SK-N-SH (cell line): ENCODE measurements at regions of chr17 and their contacts with region 1.

Region 1: GRCh38 chr17:74647871-74648672 is 24.5 kb upstream of the CD300E start:
- DNase-seq: peak; percentile 67
- H3K4me3 ChIP-seq: no peak overlapping the region
- H3K27ac ChIP-seq: peak overlapping the region in 1 of 2 experiments; percentile 17; a peak in 1 of 4 replicates
- H3K4me1 ChIP-seq: peaks cover 0 to 26% of the 10 kb centered on the region in 2 experiments; a peak in 1 of 4 replicates
- H3K27me3 ChIP-seq: no peaks in the 10 kb centered on the region
- CTCF ChIP-seq: no peak
- EP300 ChIP-seq: peak in 1 of 2 experiments; percentile 60; a peak in 1 of 4 replicates
- RAD21 ChIP-seq: no peak

Region 2: DNA sequence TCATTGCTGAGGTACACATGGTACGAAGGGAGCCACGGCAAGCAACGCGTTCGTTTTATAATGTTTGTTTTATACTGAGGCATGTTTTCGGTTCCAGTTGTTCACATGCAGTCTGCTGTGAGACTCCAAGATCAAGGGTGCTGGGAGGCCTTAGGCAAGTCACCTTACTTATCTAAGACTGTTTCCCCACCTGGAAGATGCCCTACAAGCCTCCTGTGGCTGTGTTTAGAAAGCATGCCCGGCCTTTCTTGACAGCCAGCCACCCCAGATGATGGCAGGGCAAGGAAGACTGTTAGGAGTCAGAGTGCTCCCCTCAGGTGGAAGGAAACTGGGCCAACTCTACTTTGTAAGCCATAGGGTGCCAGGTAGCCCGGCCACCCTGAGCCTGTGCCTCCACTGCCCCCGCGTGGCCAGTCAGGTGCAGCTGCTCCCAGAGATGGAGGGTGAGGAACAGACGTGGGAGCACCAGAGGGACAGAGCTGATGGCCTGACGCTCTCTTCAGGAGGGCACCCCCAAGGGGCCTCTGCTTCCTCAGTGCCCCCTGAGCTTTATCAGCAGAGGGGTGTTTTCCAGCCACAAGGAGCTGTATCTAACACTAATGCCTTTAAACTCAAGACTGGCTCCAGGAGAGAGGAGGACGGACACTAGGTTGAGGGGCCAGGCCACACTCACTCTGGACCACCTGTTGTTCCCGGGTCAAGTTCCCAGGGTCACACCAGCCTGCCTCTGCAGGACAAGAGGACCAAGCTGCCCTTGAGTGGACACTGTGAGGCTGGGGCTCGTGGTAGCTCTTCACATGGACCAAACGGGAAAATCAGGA is 122.6 kb after region 1 on chr17:
- CTCF ChIA-PET with region 1: interaction called, 17 read pairs
- POLR2A ChIA-PET with region 1: no interaction called
- DNase-seq: peak; percentile 91
- H3K4me3 ChIP-seq: no peak overlapping the region
- H3K27ac ChIP-seq: no peak overlapping the region
- H3K4me1 ChIP-seq: peaks cover 23 to 29% of the 10 kb centered on the region in 2 experiments; a peak in 3 of 4 replicates
- H3K27me3 ChIP-seq: no peaks in the 10 kb centered on the region
- CTCF ChIP-seq: peak; percentile 85
- EP300 ChIP-seq: no peak
- RAD21 ChIP-seq: peak; percentile 98

Region 3: DNA sequence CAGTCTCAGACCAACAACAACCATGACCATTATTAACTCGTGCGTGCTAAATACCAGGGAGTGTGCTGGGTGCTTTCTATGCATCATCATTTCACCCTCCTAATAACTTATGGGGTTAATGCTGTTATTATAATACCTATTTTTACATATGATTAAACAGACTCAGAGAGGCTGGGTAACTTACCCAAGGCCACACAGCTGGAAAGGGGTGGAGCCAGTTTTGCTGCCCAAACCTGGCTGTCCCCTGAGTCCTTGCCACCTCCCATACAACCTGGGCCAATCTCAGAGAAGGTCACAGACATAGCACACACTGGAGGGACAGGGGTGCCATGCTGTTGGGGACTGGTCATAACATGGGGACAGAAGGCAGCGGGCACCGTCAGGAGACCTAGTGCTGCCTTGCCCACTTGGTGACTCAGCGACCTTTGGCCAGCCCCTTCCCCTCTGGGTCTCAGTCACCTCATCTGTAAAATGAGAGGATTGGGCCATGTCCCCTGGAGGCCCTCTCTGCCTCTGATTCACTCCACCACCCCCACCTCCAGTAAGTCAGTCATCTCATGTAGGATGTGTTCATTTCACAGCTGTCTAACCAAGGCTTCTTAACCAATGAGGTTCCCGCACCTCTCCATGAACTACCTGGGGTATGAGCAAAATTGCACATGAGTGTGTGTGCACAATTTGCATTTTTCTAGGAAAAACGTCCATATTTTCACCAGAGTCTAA is 256.8 kb after region 1 on chr17:
- CTCF ChIA-PET with region 1: no interaction called
- POLR2A ChIA-PET with region 1: no interaction called
- DNase-seq: no peak
- H3K4me3 ChIP-seq: no peak overlapping the region
- H3K27ac ChIP-seq: no peak overlapping the region
- H3K4me1 ChIP-seq: no peaks in the 10 kb centered on the region
- H3K27me3 ChIP-seq: peaks cover 26% of the 10 kb centered on the region
- CTCF ChIP-seq: no peak
- EP300 ChIP-seq: no peak
- RAD21 ChIP-seq: no peak